Left cardiac atrium (tissue), 4 donors: ENCODE measurements at regions of chr10 and their contacts with region 1.

Region 1: GRCh38 chr10:119859420-119860258 is 13.0 kb downstream of the MCMBP start:
- DNase-seq: no peak
- ATAC-seq: no peak

Region 2: DNA sequence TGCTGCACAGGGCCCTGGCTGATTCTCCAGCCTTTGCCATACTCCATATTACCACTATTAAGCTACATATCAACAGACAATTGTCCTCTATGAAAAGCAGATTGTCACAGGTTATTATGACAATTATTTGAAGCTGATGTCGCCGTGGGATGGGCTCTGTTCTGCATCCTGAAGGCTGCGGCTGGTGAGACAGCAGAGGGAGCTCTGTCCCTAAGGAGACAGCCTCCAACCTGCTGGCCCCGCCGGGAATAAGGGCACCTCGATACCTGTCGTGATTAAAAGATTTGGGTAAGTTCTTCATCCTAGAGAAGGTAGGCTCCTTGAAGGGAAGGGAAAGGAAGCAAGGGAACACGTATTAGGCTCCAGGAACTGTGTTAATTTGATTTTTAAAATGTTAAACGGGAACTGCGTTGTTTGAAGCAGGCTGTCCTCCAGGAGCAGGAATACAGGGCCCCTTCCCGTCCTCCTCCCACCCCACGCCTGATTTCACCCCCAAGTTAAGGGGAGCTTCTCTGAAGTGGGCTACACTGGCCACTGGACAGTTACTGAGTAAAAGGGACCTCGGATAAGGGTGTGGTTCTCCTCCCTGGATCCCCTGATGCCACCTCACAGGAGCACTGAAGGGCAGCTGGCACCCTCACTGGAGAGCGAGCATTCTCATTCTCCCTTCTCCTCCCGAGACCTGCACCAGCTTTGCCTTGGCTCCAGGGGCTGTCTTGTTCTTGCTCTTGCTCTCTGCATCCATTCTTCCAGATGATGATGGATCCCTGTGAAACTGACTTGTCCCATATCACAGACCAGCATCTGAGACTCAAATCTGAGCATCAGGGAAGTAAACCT is 251.1 kb before region 1 on chr10:
- intact Hi-C with region 1: loop called (anchors 5 to 10 kb)
- DNase-seq: peak; percentile 51
- ATAC-seq: peak; percentile 84 to 85

Region 3: GRCh38 chr10:119616882-119617570 is 242.6 kb before region 1 on chr10:
- intact Hi-C with region 1: loop called in 1 of 2 experiments (anchors 10 kb)
- DNase-seq: peak; percentile 38
- ATAC-seq: peak in 1 of 2 donors; percentile 53

Region 4: GRCh38 chr10:119686439-119687191 is 173.0 kb before region 1 on chr10:
- intact Hi-C with region 1: loop called (anchors 5 to 10 kb)
- DNase-seq: peak; percentile 82
- ATAC-seq: peak; percentile 88 to 93

Region 5: GRCh38 chr10:119750391-119751230 is 109.0 kb before region 1 on chr10:
- intact Hi-C with region 1: loop called in 1 of 2 experiments (anchors 5 kb)
- DNase-seq: peak; percentile 66
- ATAC-seq: peak; percentile 96